ENCODE measurements at regions of chr5 and their contacts with region 1.

Region 1: DNA sequence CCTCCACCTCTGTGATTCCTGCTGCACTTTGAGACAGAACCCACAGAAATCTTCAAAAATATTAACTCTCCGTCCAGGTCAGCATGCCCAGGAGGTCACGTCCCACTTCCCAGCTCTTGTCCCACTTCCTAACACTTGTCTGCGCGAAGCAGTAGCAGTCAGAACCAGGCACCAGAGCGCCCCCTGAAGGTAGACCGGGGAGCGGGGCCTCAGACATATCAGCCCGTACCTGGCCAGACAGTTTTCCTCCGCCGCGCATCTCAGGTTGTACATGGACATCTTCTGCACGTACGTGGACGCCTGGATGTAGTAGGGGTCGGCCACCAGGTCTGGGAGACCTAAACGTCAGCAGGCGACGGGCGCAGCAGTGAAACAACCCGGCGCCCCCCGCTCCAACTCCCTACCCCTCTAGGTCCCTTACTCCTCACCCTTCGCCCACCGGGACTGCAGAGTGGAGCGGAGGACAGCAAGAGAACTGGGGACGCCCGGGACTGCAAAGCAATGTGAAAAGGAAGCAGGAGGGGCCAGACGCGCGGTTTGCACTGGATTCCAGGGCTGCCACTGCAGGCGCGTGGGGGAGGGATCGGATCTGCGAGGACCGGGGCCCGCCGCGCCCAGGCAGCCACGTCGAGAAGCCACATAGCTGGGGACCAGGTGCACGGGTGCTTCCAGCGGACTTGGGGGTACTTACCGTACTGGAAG is 1.2 kb downstream of the LOX start:
- DNase-seq: peak; percentile 74
- H3K4me3 ChIP-seq: peak overlapping the region; percentile 71 to 85
- H3K27ac ChIP-seq: peak overlapping the region in 1 of 2 experiments; percentile 83; a peak in 2 of 4 replicates
- H3K4me1 ChIP-seq: peaks cover 14 to 16% of the 10 kb centered on the region in 2 experiments; a peak in 3 of 4 replicates
- H3K27me3 ChIP-seq: no peaks in the 10 kb centered on the region
- CTCF ChIP-seq: peak; percentile 93
- EP300 ChIP-seq: 0 out of 4 replicates have a peak, but pooled peaks of 1 of the 2 experiments have one; percentile 2
- RAD21 ChIP-seq: peak; percentile 66

Region 2: DNA sequence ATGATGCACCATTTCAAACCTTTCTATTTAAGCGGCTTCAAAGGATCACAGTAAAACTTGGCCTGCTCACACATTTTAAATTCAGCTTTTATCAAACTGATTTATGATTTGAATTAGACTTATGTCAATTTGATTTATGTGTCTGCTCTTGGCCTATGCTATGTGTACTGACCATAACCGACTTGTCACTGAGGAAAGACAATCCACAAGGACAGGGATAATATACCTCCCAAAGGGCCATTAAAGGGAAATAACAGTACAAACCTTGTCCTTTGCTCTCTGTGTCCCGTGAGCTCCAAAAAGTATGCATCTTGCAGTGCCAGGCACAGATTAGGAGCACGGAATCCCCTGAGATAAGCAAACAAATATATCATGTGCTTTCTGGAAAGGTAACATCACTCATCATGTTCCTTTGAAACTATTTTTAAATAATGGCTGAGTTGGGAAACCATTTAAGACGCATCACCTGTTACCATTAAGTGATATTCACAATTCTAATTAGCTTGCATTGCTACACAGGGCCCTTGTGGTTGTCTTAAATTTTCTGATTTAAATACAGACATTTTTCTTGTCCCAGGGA is 257.0 kb before region 1 on chr5:
- CTCF ChIA-PET with region 1: no interaction called
- POLR2A ChIA-PET with region 1: no interaction called
- DNase-seq: no peak
- H3K4me3 ChIP-seq: no peak overlapping the region
- H3K27ac ChIP-seq: no peak overlapping the region
- H3K4me1 ChIP-seq: no peaks in the 10 kb centered on the region
- H3K27me3 ChIP-seq: no peaks in the 10 kb centered on the region
- CTCF ChIP-seq: no peak
- EP300 ChIP-seq: no peak
- RAD21 ChIP-seq: no peak

Region 3: GRCh38 chr5:121982146-121982892 is 94.5 kb before region 1 on chr5:
- CTCF ChIA-PET with region 1: interaction called, 12 read pairs
- POLR2A ChIA-PET with region 1: no interaction called
- DNase-seq: no peak
- H3K4me3 ChIP-seq: no peak overlapping the region
- H3K27ac ChIP-seq: no peak overlapping the region
- H3K4me1 ChIP-seq: peaks cover 0 to 10% of the 10 kb centered on the region in 2 experiments; a peak in 2 of 4 replicates
- H3K27me3 ChIP-seq: no peaks in the 10 kb centered on the region
- CTCF ChIP-seq: no peak
- EP300 ChIP-seq: no peak
- RAD21 ChIP-seq: no peak

Region 4: GRCh38 chr5:122063836-122064235 is 13.0 kb before region 1 on chr5:
- CTCF ChIA-PET with region 1: interaction called, 18 read pairs
- POLR2A ChIA-PET with region 1: no interaction called
- DNase-seq: no peak
- H3K4me3 ChIP-seq: no peak overlapping the region
- H3K27ac ChIP-seq: peak overlapping the region in 1 of 2 experiments; percentile 54; a peak in 2 of 4 replicates
- H3K4me1 ChIP-seq: peaks cover 0 to 4% of the 10 kb centered on the region in 2 experiments; a peak in 2 of 4 replicates
- H3K27me3 ChIP-seq: no peaks in the 10 kb centered on the region
- CTCF ChIP-seq: no peak
- EP300 ChIP-seq: no peak
- RAD21 ChIP-seq: no peak

Region 5: GRCh38 chr5:122091936-122092600 is 15.3 kb after region 1 on chr5:
- CTCF ChIA-PET with region 1: interaction called, 18 read pairs
- POLR2A ChIA-PET with region 1: no interaction called
- DNase-seq: no peak
- H3K4me3 ChIP-seq: no peak overlapping the region
- H3K27ac ChIP-seq: peak overlapping the region in 1 of 2 experiments; percentile 93; a peak in 2 of 4 replicates
- H3K4me1 ChIP-seq: peaks cover 0 to 32% of the 10 kb centered on the region in 2 experiments; a peak in 3 of 4 replicates
- H3K27me3 ChIP-seq: no peaks in the 10 kb centered on the region
- CTCF ChIP-seq: peak; percentile 66
- EP300 ChIP-seq: no peak
- RAD21 ChIP-seq: peak; percentile 57

Region 6: GRCh38 chr5:122101636-122102285 is 24.9 kb after region 1 on chr5:
- CTCF ChIA-PET with region 1: interaction called, 25 read pairs
- POLR2A ChIA-PET with region 1: no interaction called
- DNase-seq: peak; percentile 23
- H3K4me3 ChIP-seq: peak overlapping the region in 1 of 2 experiments; percentile 8; a peak in 1 of 4 replicates
- H3K27ac ChIP-seq: no peak overlapping the region
- H3K4me1 ChIP-seq: peaks cover 0 to 6% of the 10 kb centered on the region in 2 experiments; a peak in 1 of 4 replicates
- H3K27me3 ChIP-seq: no peaks in the 10 kb centered on the region
- CTCF ChIP-seq: peak; percentile 77
- EP300 ChIP-seq: no peak
- RAD21 ChIP-seq: peak; percentile 81

Measured in SK-N-SH (cell line).